Left colon (tissue), 2 donors: ENCODE measurements at regions of chr3 and their contacts with region 1.

Region 1: GRCh38 chr3:157136647-157137387 is 23.1 kb downstream of the CCNL1 start:
- DNase-seq: peak; percentile 76 to 93
- ATAC-seq: peak; percentile 91

Region 2: GRCh38 chr3:156816800-156817645 is 319.8 kb before region 1 on chr3:
- intact Hi-C with region 1: loop called in 1 of 2 experiments (anchors 5 kb)
- DNase-seq: peak; percentile 93 to 94
- ATAC-seq: peak; percentile 89